ENCODE measurements at regions of chr19 and their contacts with region 1.

Region 1: DNA sequence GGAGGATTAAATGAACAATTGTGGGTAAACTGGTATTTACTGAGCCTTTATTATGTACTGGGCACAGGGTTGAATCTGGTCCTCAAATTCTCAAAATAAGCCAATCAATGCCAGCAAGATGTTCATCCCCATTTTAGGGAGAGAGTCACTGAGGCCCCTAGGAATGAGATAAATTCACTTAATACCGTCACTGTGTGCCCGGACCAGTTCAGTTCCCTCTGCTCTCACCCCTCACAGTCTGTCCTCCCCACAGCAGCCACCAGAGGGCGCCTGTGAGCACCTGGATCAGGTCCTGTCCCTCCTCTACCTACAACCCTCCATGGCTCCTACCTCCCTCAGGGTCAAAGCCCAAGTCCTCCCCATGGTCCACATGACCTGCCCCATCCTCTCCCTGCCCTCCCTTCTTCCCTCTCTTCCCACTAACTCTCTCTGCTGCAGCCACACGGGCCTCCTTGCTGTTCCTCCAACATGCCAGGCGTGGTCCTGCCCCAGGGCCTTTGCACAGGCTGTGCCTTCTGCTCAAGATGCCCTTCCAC is 42.0 kb upstream of the NFIC start:
- DNase-seq: no peak
- H3K4me3 ChIP-seq: no peak overlapping the region
- H3K27ac ChIP-seq: no peak overlapping the region
- H3K4me1 ChIP-seq: no peaks in the 10 kb centered on the region
- H3K27me3 ChIP-seq: peaks cover 4 to 21% of the 10 kb centered on the region in 2 donors
- CTCF ChIP-seq: peak in 2 of 3 donors; percentile 58 to 77
- POLR2A ChIP-seq: no peak

Region 2: GRCh38 chr19:2444251-2445031 is 879.9 kb before region 1 on chr19:
- intact Hi-C with region 1: loop called (anchors 5 kb)
- DNase-seq: no peak
- H3K4me3 ChIP-seq: no peak overlapping the region
- H3K27ac ChIP-seq: no peak overlapping the region
- H3K4me1 ChIP-seq: no peaks in the 10 kb centered on the region
- H3K27me3 ChIP-seq: no peaks in the 10 kb centered on the region
- CTCF ChIP-seq: no peak
- POLR2A ChIP-seq: no peak

Region 3: GRCh38 chr19:2455851-2456570 is 868.4 kb before region 1 on chr19:
- intact Hi-C with region 1: no loop called
- DNase-seq: no peak
- H3K4me3 ChIP-seq: peak overlapping the region; percentile 80 to 100 (median 100)
- H3K27ac ChIP-seq: peak overlapping the region; percentile 40 to 85
- H3K4me1 ChIP-seq: peaks cover 0 to 8% of the 10 kb centered on the region in 2 donors
- H3K27me3 ChIP-seq: no peaks in the 10 kb centered on the region
- CTCF ChIP-seq: no peak
- POLR2A ChIP-seq: no peak

Region 4: DNA sequence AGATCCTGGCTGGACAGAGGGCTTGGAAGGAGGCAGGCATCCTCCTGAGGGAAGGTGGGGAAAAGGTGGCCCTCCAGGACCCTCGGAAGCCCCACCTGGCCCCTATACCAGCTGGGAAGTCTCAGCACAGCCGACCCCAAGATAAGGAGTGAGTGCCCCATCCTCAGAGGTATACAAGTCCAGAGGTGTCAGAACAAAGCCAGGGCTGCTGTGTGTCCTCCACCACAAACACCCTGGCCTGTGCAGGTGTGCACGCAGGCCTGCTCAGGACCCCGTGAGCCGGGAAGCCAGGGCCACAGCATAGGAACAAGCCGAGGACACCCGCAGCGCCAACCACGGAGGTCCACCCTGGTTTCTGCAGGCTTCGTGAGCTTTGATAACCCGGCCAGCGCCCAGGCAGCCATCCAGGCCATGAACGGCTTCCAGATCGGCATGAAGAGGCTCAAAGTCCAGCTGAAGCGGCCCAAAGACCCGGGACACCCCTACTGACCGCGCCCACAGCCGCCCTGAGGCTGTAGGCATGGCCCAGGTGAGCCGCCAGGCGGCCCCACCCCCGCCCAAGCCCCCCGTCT is 31.3 kb before region 1 on chr19:
- intact Hi-C with region 1: no loop called
- DNase-seq: no peak
- H3K4me3 ChIP-seq: no peak overlapping the region
- H3K27ac ChIP-seq: no peak overlapping the region
- H3K4me1 ChIP-seq: no peaks in the 10 kb centered on the region
- H3K27me3 ChIP-seq: peaks cover 0 to 8% of the 10 kb centered on the region in 2 donors
- CTCF ChIP-seq: no peak
- POLR2A ChIP-seq: no peak

Region 5: GRCh38 chr19:3469638-3470499 is 145.5 kb after region 1 on chr19:
- intact Hi-C with region 1: loop called (anchors 10 kb)
- DNase-seq: no peak
- H3K4me3 ChIP-seq: no peak overlapping the region
- H3K27ac ChIP-seq: peak overlapping the region; percentile 32 to 55
- H3K4me1 ChIP-seq: peaks cover 0 to 3% of the 10 kb centered on the region in 2 donors
- H3K27me3 ChIP-seq: no peaks in the 10 kb centered on the region
- CTCF ChIP-seq: no peak
- POLR2A ChIP-seq: no peak